Caco-2 (cell line): ENCODE measurements at regions of chr6 and their contacts with region 1.

Region 1: DNA sequence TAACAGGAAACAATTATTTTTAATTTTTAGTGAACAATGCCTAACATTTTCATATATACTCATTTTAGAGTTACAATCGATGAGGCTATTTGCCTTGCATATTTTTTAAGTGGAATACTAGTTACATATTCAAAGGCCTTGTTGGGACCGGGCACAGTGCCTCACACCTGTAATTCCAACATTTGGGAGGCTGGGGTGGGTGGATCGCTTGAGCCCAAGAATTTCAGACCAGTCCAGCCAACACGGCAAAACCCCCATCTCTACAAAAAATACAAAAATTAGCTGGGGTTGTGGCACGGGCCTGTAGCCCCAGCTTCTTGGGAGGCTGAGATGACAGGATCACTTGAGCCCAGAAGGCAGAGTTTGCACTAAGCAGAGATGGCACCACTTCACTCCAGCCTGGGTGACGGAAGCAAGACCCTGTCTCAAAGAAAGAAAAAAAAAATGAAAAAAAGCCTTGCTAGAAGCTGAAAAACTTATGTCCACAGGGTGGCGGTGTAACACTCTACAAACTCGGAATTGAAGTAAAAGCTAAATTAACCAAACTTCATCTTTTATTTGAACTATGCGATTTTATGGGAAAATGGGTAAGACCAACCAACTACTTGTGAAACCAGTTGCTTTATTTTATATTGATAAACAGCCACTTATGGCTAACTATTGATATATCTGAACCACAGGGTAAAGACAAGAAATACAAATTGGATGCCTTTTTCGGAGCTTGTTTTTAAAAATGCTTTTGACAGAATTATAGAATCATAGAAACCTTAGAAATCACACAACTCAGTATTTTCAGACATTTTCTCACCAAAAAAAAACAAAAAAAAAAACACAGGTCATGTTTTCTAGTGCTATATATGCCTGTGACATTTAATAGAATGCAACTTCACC is 24.1 kb upstream of the ROS1 start:
- DNase-seq: peak; percentile 44 to 67
- H3K4me3 ChIP-seq: no peak overlapping the region
- H3K4me3 Mint-ChIP-seq: no peak overlapping the region
- H3K27ac Mint-ChIP-seq: no peak overlapping the region
- H3K4me1 ChIP-seq: 0 out of 2 replicates have a peak, but pooled peaks cover 4% of the 10 kb centered on the region
- H3K4me1 Mint-ChIP-seq: peaks cover 14% of the 10 kb centered on the region
- H3K27me3 ChIP-seq: no peaks in the 10 kb centered on the region; the same call in 1 of the 2 replicates
- H3K27me3 Mint-ChIP-seq: peaks cover 3% of the 10 kb centered on the region
- CTCF ChIP-seq: peak; percentile 57 to 59

Region 2: GRCh38 chr6:117346142-117346930 is 103.5 kb before region 1 on chr6:
- CTCF ChIA-PET with region 1: no interaction called
- POLR2A ChIA-PET with region 1: no interaction called
- intact Hi-C with region 1: loop called (anchors 2 kb)
- DNase-seq: no peak
- H3K4me3 ChIP-seq: no peak overlapping the region
- H3K4me3 Mint-ChIP-seq: no peak overlapping the region
- H3K27ac Mint-ChIP-seq: no peak overlapping the region
- H3K4me1 ChIP-seq: no peaks in the 10 kb centered on the region
- H3K4me1 Mint-ChIP-seq: no peaks in the 10 kb centered on the region
- H3K27me3 ChIP-seq: no peaks in the 10 kb centered on the region
- H3K27me3 Mint-ChIP-seq: peaks cover 6% of the 10 kb centered on the region
- CTCF ChIP-seq: peak in 1 of 2 experiments; percentile 9

Region 3: DNA sequence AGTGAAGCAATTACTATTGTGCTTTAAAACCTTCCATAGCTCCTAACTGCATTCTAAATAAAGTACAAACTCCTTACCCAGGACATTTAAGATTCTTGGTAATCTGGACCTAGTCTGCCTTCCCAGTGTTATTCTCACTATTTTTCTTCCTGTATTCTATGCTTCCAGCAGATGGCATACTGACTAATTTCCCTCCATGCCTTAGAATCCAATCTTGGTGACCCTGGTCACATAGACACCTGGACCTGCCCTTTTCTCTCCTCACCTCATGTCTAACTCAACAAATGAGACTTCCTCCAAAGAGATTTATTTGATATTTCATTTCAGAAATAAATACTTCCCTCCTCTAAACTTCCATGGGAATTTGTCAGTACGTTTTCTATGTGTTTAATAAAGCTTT is 49.9 kb before region 1 on chr6:
- CTCF ChIA-PET with region 1: no interaction called
- POLR2A ChIA-PET with region 1: no interaction called
- intact Hi-C with region 1: loop called (anchors 2 kb)
- DNase-seq: peak in 1 of 2 experiments; percentile 15
- H3K4me3 ChIP-seq: no peak overlapping the region
- H3K4me3 Mint-ChIP-seq: no peak overlapping the region
- H3K27ac Mint-ChIP-seq: no peak overlapping the region
- H3K4me1 ChIP-seq: no peaks in the 10 kb centered on the region
- H3K4me1 Mint-ChIP-seq: no peaks in the 10 kb centered on the region
- H3K27me3 ChIP-seq: no peaks in the 10 kb centered on the region
- H3K27me3 Mint-ChIP-seq: no peaks in the 10 kb centered on the region
- CTCF ChIP-seq: peak; percentile 29 to 48

Region 4: GRCh38 chr6:117555882-117556498 is 106.2 kb after region 1 on chr6:
- CTCF ChIA-PET with region 1: interaction called, 6 read pairs
- POLR2A ChIA-PET with region 1: no interaction called
- intact Hi-C with region 1: loop called (anchors 1 kb)
- DNase-seq: peak in 1 of 2 experiments; percentile 58
- H3K4me3 ChIP-seq: no peak overlapping the region
- H3K4me3 Mint-ChIP-seq: no peak overlapping the region
- H3K27ac Mint-ChIP-seq: no peak overlapping the region
- H3K4me1 ChIP-seq: peaks cover 24% of the 10 kb centered on the region
- H3K4me1 Mint-ChIP-seq: no peaks in the 10 kb centered on the region
- H3K27me3 ChIP-seq: no peaks in the 10 kb centered on the region
- H3K27me3 Mint-ChIP-seq: no peaks in the 10 kb centered on the region
- CTCF ChIP-seq: peak; percentile 60 to 82

Region 5: GRCh38 chr6:117674991-117675657 is 225.3 kb after region 1 on chr6 and contains the start of gene NUS1:
- CTCF ChIA-PET with region 1: no interaction called
- POLR2A ChIA-PET with region 1: no interaction called
- intact Hi-C with region 1: loop called (anchors 2 kb)
- DNase-seq: peak; percentile 97 to 98
- H3K4me3 ChIP-seq: peak within 1 kb of the TSS; percentile 86
- H3K4me3 Mint-ChIP-seq: peak within 1 kb of the TSS; percentile 80
- H3K27ac Mint-ChIP-seq: peak within 1 kb of the TSS; percentile 88
- H3K4me1 ChIP-seq: peaks cover 6% of the 10 kb centered on the region; the same call in 1 of the 2 replicates
- H3K4me1 Mint-ChIP-seq: peaks cover 21% of the 10 kb centered on the region
- H3K27me3 ChIP-seq: no peaks in the 10 kb centered on the region
- H3K27me3 Mint-ChIP-seq: no peaks in the 10 kb centered on the region
- CTCF ChIP-seq: peak; percentile 67 to 88
- total RNA-seq, gene NUS1: 38.9 and 41.1 TPM in 2 replicates

Region 6: GRCh38 chr6:117711369-117711768 is 261.6 kb after region 1 on chr6:
- CTCF ChIA-PET with region 1: no interaction called
- POLR2A ChIA-PET with region 1: no interaction called
- intact Hi-C with region 1: loop called (anchors 10 kb)
- DNase-seq: peak; percentile 35 to 39
- H3K4me3 ChIP-seq: no peak overlapping the region
- H3K4me3 Mint-ChIP-seq: no peak overlapping the region
- H3K27ac Mint-ChIP-seq: no peak overlapping the region
- H3K4me1 ChIP-seq: no peaks in the 10 kb centered on the region
- H3K4me1 Mint-ChIP-seq: no peaks in the 10 kb centered on the region
- H3K27me3 ChIP-seq: no peaks in the 10 kb centered on the region
- H3K27me3 Mint-ChIP-seq: no peaks in the 10 kb centered on the region
- CTCF ChIP-seq: peak; percentile 16 to 28